ENCODE measurements at regions of chrX and their contacts with region 1.

Region 1: DNA sequence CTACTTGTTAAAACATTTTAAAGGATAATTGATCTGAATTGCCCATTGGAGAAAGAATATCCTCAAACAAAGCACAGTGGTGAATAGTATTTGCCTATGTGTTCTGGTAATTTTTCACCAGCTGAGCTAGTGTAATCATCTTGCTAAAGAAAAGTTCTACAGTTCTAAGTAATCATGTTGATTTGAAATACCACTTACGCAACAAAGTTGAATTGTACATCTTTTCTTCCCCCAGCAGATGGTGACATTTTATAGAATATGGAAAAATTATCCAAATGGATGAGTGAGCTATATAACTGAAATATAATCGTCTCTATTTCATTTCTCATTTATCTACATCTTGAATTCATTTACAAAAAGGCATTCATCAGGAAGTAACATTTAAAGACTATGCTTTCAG is 9.7 kb upstream of the ZNF674 start:
- DNase-seq: no peak
- ATAC-seq: no peak
- H3K4me3 ChIP-seq: no peak overlapping the region
- H3K27ac ChIP-seq: no peak overlapping the region
- H3K4me1 ChIP-seq: no peaks in the 10 kb centered on the region
- H3K27me3 ChIP-seq: no peaks in the 10 kb centered on the region
- CTCF ChIP-seq: no peak; the same call in 1 of the 2 replicates

Region 2: DNA sequence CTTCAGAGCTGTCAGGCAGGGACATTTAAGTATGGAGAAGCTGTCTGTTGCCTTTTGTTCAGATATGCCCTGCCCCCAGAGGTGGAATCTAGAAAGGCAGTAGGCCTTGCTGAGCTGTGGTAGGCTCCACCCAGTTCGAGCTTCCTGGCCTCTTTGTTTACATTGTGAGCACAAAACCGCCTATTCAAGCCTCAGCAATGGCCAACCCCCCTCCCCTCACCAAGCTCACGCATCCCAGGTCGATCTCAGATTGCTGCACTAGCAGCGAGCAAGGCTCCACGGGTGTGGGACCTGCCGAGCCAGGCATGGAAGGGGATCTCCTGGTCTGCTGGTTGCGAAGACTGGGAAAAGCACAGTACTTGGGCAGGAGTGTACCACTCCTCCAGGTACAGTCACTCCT is 69.0 kb before region 1 on chrX:
- CTCF ChIA-PET with region 1: no interaction called
- POLR2A ChIA-PET with region 1: no interaction called
- in situ Hi-C with region 1: no loop called
- intact Hi-C with region 1: no loop called
- DNase-seq: no peak
- ATAC-seq: no peak
- H3K4me3 ChIP-seq: no peak overlapping the region
- H3K27ac ChIP-seq: no peak overlapping the region
- H3K4me1 ChIP-seq: no peaks in the 10 kb centered on the region
- H3K27me3 ChIP-seq: no peaks in the 10 kb centered on the region
- CTCF ChIP-seq: no peak

Region 3: GRCh38 chrX:46686003-46686645 is 131.2 kb after region 1 on chrX:
- CTCF ChIA-PET with region 1: no interaction called
- POLR2A ChIA-PET with region 1: no interaction called
- in situ Hi-C with region 1: no loop called
- intact Hi-C with region 1: loop called (anchors 5 kb)
- DNase-seq: no peak
- ATAC-seq: peak; percentile 84
- H3K4me3 ChIP-seq: no peak overlapping the region
- H3K27ac ChIP-seq: no peak overlapping the region
- H3K4me1 ChIP-seq: peaks cover 4% of the 10 kb centered on the region; the same call in 1 of the 2 replicates
- H3K27me3 ChIP-seq: no peaks in the 10 kb centered on the region
- CTCF ChIP-seq: peak; percentile 82

Region 4: DNA sequence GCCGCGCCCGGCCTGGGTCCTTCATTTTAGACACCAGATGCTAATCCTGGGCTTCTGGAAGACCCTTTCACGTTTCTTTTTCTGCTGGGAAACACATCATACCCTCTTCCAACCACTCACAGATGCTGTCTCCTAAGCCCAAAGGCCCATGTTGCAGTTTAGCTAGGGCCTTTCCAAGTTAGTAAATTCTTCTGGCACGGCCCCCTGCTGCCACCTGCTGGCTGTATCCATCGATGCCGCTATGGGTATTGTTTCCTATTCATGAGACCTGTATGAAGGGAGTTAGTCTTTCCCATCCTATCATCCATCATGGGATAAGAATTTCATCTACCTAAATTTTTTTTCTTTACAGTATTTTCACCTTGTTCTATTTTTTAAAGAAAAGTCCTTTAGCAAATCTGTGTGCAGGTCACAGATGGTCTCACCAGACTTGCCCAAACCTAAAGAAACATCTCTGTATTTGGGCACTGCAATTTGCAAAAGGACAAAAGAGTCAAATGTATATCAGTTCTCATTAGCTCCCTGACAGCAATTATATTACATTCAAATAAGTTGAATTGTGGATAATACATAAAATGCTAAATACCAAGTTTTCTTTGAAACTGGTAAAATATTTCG is 241.7 kb after region 1 on chrX:
- CTCF ChIA-PET with region 1: no interaction called
- POLR2A ChIA-PET with region 1: no interaction called
- in situ Hi-C with region 1: no loop called
- intact Hi-C with region 1: loop called (anchors 10 kb)
- DNase-seq: peak; percentile 52
- ATAC-seq: peak; percentile 85
- H3K4me3 ChIP-seq: no peak overlapping the region
- H3K27ac ChIP-seq: no peak overlapping the region; the same call in 1 of the 2 replicates
- H3K4me1 ChIP-seq: peaks cover 11% of the 10 kb centered on the region
- H3K27me3 ChIP-seq: no peaks in the 10 kb centered on the region
- CTCF ChIP-seq: peak; percentile 90

Measured in Panc1 (cell line).